ENCODE measurements at regions of chr19 and their contacts with region 1.

Region 1: DNA sequence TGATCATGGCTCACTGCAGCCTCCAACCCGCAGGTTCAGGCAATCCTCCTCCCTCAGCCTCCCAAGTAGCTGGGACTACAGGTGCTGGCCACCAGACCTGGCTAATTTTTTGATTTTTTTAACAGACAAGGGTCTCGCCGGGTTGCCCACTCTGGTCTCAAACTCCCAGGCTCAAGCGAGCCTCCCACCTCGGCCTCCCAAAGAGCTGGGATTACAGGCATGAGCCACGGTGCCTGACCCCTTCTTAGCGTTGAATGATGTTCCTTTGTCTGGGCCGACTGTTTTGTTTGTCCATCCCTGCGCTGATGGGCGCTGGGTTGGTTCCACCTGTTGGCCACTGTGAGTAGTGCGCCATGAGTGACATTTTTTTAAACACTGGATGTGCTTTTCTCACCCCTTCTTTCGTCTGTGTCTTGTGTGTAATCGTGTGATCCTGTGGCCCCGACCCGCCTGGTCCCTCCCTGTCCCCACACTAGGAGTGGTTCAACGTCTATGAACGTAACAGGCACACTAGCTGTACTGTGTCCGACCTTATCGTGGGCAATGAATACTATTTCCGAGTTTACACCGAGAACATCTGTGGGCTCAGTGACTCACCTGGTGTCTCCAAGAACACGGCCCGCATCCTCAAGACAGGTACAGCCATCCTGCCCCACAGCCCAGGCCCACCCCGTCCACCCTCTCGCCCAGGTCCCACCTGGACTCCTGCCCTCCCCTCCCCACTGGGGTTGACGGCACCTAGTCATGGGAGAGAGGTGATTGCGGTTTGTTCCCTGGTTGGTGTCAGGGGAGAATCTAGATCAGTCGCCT is 15.0 kb upstream of the EMC10 start:
- DNase-seq: peak; percentile 6
- H3K4me3 ChIP-seq: no peak overlapping the region
- H3K27me3 ChIP-seq: peaks cover 2% of the 10 kb centered on the region; the same call in 1 of the 2 replicates
- CTCF ChIP-seq: peak; percentile 86

Region 2: DNA sequence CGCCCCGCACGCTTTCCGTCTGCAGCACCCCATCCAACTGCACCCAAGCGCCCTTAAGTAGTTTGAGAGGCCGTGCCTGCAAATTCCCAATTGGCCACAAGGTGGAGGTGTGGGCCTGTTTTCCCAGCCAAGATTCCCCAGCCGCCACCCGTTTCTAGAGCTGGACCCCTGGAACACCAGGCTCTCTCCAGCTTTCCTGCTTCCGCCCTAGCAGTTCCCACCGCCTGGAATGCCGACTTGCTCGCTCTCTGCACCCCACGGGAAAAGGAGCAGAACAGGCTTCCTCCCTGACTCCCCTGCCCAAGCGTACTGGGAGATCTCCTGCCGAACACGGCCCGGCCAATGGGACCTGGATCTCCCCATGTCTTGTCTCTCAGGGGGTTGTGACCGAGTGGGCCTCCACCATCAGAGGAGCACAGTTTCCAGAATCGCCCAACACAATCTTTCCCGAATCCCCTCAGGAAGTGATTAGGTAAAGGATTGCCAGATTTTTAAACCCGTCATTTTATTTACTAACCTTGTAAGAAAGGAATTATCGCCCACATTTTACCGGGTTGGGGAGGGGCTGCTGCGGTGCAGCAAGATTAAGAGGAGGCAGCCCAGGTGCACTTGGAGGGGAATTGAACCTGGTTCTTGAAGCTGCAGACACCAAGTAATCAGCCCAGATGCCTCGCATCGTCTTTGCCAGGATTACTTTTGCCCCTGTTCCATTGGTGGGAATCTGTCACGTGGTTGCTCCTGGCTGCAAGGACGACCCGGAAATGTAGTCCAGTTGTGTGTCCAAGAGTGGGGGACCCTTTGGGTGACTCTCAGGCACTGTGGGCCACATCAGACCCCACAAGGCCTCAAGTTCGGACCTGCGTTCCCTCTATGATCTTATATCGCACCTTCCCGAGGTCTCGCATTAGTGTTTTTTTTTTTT is 92.4 kb before region 1 on chr19:
- CTCF ChIA-PET with region 1: interaction called, 82 read pairs
- POLR2A ChIA-PET with region 1: interaction called, 9 read pairs
- DNase-seq: peak; percentile 44
- H3K4me3 ChIP-seq: peak overlapping the region; percentile 86
- H3K27me3 ChIP-seq: no peaks in the 10 kb centered on the region
- CTCF ChIP-seq: peak; percentile 86

Region 3: DNA sequence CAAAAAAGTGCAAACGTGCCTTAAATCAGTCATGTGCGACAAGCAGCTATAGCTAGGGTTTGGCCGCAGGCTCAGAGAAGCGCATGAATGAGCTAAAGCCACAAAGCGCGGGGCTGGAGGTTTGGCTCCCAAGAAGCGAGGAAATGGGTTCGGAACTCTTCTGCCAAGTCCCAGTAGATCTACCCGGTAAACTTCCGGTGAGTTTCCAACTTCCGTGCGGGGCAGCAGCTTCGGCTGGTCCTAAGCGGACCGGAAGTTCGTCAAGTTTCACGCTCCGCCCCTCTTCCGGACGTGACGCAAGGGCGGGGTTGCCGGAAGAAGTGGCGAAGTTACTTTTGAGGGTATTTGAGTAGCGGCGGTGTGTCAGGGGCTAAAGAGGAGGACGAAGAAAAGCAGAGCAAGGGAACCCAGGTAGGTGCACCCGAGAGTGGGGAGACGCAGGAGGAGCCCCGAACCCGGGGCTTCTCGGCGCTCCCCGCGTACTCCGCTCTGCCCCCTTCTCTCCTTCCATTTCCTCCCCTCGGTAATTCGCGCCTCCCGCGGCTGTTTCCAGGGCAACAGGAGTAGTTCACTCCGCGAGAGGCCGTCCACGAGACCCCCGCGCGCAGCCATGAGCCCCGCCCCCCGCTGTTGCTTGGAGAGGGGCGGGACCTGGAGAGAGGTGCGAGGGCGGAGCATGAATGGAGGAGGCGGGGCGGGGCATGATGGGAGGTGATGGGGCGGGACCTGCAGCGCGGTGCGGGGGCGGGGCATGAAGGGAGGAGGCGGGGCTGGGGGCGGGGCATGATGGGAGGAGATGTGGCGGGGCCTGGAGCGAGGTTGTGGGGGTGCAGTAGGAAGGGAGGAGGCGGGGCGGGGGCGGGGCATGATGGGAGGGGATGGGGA is 84.9 kb before region 1 on chr19 and contains the start of gene NR1H2:
- CTCF ChIA-PET with region 1: interaction called, 15 read pairs
- POLR2A ChIA-PET with region 1: no interaction called
- DNase-seq: peak; percentile 75
- H3K4me3 ChIP-seq: peak within 1 kb of the TSS; percentile 97
- H3K27me3 ChIP-seq: no peaks in the 10 kb centered on the region
- CTCF ChIP-seq: no peak
- polyA plus RNA-seq, gene NR1H2: 51.2 and 78.4 TPM in 2 replicates

Measured in BJ (cell line).